ENCODE measurements at regions of chr7 and their contacts with region 1.

Region 1: GRCh38 chr7:82494420-82494819 is 50.8 kb upstream of the CACNA2D1 start:
- DNase-seq: no peak
- H3K4me3 Mint-ChIP-seq: no peak overlapping the region
- H3K27ac Mint-ChIP-seq: no peak overlapping the region
- H3K4me1 Mint-ChIP-seq: no peaks in the 10 kb centered on the region
- H3K27me3 Mint-ChIP-seq: peaks cover 36% of the 10 kb centered on the region
- CTCF ChIP-seq: no peak

Region 2: GRCh38 chr7:82348251-82348650 is 146.2 kb before region 1 on chr7:
- CTCF ChIA-PET with region 1: no interaction called
- POLR2A ChIA-PET with region 1: no interaction called
- intact Hi-C with region 1: no loop called
- DNase-seq: no peak
- H3K4me3 Mint-ChIP-seq: no peak overlapping the region
- H3K27ac Mint-ChIP-seq: no peak overlapping the region
- H3K4me1 Mint-ChIP-seq: no peaks in the 10 kb centered on the region
- H3K27me3 Mint-ChIP-seq: peaks cover 34% of the 10 kb centered on the region
- CTCF ChIP-seq: no peak

Region 3: DNA sequence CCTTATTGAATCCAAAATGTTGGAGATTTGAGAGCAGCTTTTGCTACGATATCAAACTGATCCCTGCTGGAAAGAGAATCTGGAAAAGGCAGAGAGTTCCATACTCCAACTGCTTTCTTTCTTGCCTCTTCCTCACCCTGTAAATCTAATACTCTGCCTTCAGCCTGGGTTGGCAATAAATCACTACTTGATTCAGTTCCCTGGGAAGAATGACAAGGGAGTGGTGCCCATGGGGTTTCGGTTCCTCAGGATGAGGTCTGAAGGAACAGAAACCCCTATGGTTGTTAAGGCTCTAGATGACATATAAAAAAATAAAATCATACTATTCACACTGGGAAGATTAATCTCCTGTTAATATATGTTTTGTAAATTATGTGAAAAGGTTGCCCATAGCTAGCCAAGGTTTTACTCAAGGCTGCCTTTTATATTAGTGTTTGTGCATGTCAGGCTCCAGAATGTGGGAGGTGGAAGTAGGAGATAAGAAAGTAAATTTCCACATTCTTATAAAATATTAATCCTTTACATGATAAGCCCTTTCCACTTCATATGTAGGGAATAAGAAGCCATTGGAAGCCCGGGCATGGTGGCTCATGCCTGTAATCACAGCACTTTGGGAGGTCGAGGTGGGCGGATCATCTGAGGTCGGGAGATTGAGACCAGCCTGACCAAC is 55.3 kb after region 1 on chr7:
- CTCF ChIA-PET with region 1: no interaction called
- POLR2A ChIA-PET with region 1: no interaction called
- intact Hi-C with region 1: loop called (anchors 2 kb)
- DNase-seq: no peak
- H3K4me3 Mint-ChIP-seq: no peak overlapping the region
- H3K27ac Mint-ChIP-seq: no peak overlapping the region
- H3K4me1 Mint-ChIP-seq: no peaks in the 10 kb centered on the region
- H3K27me3 Mint-ChIP-seq: peaks cover 23% of the 10 kb centered on the region
- CTCF ChIP-seq: no peak

Measured in MCF 10A (cell line).